ENCODE measurements at regions of chr14 and their contacts with region 1.

Region 1: GRCh38 chr14:39174560-39175444 is at the start of gene PNN:
- DNase-seq: peak; percentile 97 to 99
- H3K4me3 ChIP-seq: peak within 1 kb of the TSS; percentile 78 to 86
- H3K27ac ChIP-seq: peak within 1 kb of the TSS; percentile 84 to 90
- H3K4me1 ChIP-seq: peaks cover 0 to 24% (median 16%) of the 10 kb centered on the region in 4 donors
- H3K27me3 ChIP-seq: no peaks in the 10 kb centered on the region
- CTCF ChIP-seq: peak in 1 of 2 experiments; percentile 37

Region 2: GRCh38 chr14:39102969-39103957 is 71.5 kb before region 1 on chr14 and contains the start of gene SEC23A:
- intact Hi-C with region 1: loop called (anchors 5 kb)
- DNase-seq: peak; percentile 94 to 96
- H3K4me3 ChIP-seq: peak within 1 kb of the TSS; percentile 95 to 99
- H3K27ac ChIP-seq: peak within 1 kb of the TSS; percentile 99
- H3K4me1 ChIP-seq: peaks cover 0 to 45% (median 12%) of the 10 kb centered on the region in 4 donors
- H3K27me3 ChIP-seq: no peaks in the 10 kb centered on the region
- CTCF ChIP-seq: no peak

Region 3: GRCh38 chr14:39266871-39267591 is 92.2 kb after region 1 on chr14:
- intact Hi-C with region 1: loop called (anchors 2 kb)
- DNase-seq: peak; percentile 77 to 89
- H3K4me3 ChIP-seq: peak overlapping the region; percentile 90 to 98
- H3K27ac ChIP-seq: peak overlapping the region; percentile 99
- H3K4me1 ChIP-seq: peaks cover 0 to 41% (median 14%) of the 10 kb centered on the region in 4 donors
- H3K27me3 ChIP-seq: no peaks in the 10 kb centered on the region
- CTCF ChIP-seq: no peak

Region 4: DNA sequence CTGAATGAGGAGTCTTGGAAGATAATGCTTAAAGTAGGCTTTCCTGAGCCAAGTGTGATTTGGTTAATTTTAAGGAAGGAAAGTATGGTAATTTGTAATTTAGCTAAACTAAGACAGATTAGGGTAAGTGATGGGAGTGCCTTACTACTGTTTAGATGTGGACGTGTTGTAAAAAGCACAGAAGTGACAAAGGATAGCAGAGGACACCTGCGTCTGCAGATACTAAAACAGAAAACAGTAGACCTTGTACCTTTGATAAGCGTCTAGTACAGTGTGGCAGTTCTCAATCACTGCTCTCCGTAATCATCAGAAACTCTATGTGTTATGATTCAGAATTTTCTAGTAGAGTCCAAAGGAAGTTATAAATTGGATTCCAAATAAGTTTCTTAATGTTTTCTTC is 116.9 kb after region 1 on chr14:
- intact Hi-C with region 1: no loop called
- DNase-seq: no peak
- H3K4me3 ChIP-seq: no peak overlapping the region
- H3K27ac ChIP-seq: no peak overlapping the region
- H3K4me1 ChIP-seq: no peaks in the 10 kb centered on the region
- H3K27me3 ChIP-seq: no peaks in the 10 kb centered on the region
- CTCF ChIP-seq: no peak

Region 5: GRCh38 chr14:40010961-40011360 is 836.2 kb after region 1 on chr14:
- intact Hi-C with region 1: no loop called
- DNase-seq: no peak
- H3K4me3 ChIP-seq: no peak overlapping the region
- H3K27ac ChIP-seq: no peak overlapping the region
- H3K4me1 ChIP-seq: no peaks in the 10 kb centered on the region
- H3K27me3 ChIP-seq: no peaks in the 10 kb centered on the region
- CTCF ChIP-seq: no peak

Region 6: GRCh38 chr14:40240245-40240859 is 1065.5 kb after region 1 on chr14:
- intact Hi-C with region 1: no loop called
- DNase-seq: no peak
- H3K4me3 ChIP-seq: no peak overlapping the region
- H3K27ac ChIP-seq: no peak overlapping the region
- H3K4me1 ChIP-seq: no peaks in the 10 kb centered on the region
- H3K27me3 ChIP-seq: no peaks in the 10 kb centered on the region
- CTCF ChIP-seq: no peak

Measured in tibial artery (tissue), 4 donors.